ENCODE measurements at regions of chr9 and their contacts with region 1.

Region 1: DNA sequence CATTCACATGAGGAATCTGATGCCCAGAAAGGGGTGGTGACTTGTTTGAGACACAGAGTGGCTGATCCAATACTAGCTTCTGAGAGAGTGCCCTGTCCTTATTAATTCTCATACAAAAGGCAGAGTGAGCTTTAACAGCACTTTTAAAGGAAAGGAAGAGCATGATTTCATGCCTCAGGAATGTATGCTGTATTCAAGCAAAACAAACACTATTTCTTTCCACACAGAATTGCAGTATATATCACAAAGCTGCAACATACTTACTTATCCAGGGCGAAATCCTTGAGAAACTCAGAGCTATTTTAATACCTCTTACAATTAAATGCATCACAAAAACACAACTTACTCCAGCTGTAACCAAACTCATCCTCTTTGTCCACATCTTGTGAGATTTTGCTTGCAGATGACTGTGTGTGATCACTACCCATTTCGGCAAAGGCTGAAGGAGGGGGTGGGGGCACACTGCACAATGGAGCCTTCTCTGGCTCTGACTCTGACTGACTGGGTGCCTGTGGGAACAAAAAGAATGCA is 139.8 kb downstream of the MPDZ start:
- DNase-seq: no peak
- H3K4me3 ChIP-seq: no peak overlapping the region
- H3K27ac ChIP-seq: no peak overlapping the region
- H3K4me1 ChIP-seq: peaks cover 3 to 29% of the 10 kb centered on the region in 2 donors
- H3K27me3 ChIP-seq: no peaks in the 10 kb centered on the region
- CTCF ChIP-seq: no peak

Region 2: DNA sequence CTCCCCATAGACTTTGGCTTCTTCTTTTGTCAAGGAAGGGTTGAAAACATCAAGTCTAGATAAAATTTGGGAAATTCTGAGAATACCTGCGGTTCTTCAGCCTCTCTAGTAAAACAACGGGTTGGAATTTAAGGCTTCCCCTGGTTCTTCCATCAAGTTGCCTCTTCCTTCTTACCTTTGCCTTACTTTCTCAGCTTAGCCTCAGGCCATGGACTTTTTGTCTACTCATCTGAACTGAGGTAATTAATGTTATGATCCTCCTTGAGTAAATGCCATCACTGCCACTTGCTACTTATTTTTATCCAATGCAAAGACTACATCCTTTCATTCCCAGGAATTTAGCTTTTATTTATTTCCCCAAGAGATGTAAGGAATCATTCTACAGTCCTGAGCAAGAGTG is 44.6 kb before region 1 on chr9:
- intact Hi-C with region 1: loop called (anchors 5 kb)
- DNase-seq: no peak
- H3K4me3 ChIP-seq: no peak overlapping the region
- H3K27ac ChIP-seq: no peak overlapping the region
- H3K4me1 ChIP-seq: peaks cover 0 to 22% of the 10 kb centered on the region in 2 donors
- H3K27me3 ChIP-seq: no peaks in the 10 kb centered on the region
- CTCF ChIP-seq: no peak

Region 3: DNA sequence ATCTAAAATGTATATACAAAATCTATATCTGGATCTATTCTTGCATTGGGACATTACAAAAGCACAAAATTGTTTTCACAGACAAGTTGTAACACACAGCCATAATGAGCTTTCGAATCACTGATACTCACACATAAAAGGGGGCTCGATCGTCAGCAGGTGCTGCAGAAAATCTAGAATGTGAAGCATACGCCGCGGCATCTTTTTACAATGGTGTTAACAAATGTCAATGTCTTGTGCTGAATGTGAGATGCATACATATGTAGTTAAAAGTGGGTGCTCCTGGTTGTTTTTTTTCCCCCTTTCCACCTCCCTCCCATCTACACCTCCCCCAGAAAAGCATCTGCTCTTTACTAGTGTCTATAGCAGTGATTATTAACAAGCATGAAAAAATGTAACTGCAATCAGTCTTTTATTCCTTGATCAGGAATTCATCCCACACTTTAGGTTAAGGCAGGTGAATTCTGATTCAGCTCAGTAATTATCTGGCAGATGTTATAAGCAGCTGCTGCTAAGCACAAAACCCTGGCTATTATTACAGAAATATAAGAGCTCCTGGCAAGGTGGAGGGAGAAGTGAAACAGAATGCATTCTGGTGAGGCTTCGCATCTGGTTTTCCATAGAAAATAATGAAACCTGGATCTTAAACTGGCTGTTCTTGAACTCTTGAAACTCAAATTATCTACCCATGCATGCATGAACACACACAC is 25.7 kb after region 1 on chr9:
- intact Hi-C with region 1: no loop called
- DNase-seq: no peak
- H3K4me3 ChIP-seq: no peak overlapping the region
- H3K27ac ChIP-seq: no peak overlapping the region
- H3K4me1 ChIP-seq: no peaks in the 10 kb centered on the region
- H3K27me3 ChIP-seq: no peaks in the 10 kb centered on the region
- CTCF ChIP-seq: no peak

Region 4: GRCh38 chr9:13179257-13179656 is 39.6 kb after region 1 on chr9:
- intact Hi-C with region 1: no loop called
- DNase-seq: no peak
- H3K4me3 ChIP-seq: no peak overlapping the region
- H3K27ac ChIP-seq: no peak overlapping the region
- H3K4me1 ChIP-seq: no peaks in the 10 kb centered on the region
- H3K27me3 ChIP-seq: no peaks in the 10 kb centered on the region
- CTCF ChIP-seq: no peak

Measured in ascending aorta (tissue), 2 donors.